Activated CD8-positive, alpha-beta T cell treated with anti-CD3 and anti-CD28 coated beads, Interleukin-2, amount 10 ng/mL, durations not matched to agents 7 days and 5 days (primary cell): ENCODE measurements at regions of chr12 and their contacts with region 1.

Region 1: GRCh38 chr12:76455582-76456345 is 103.8 kb downstream of the OSBPL8 start:
- DNase-seq: peak; percentile 32
- ATAC-seq: peak; percentile 70
- H3K4me3 Mint-ChIP-seq: no peak overlapping the region
- H3K27ac Mint-ChIP-seq: no peak overlapping the region
- H3K4me1 Mint-ChIP-seq: peaks cover 5% of the 10 kb centered on the region
- H3K27me3 Mint-ChIP-seq: no peaks in the 10 kb centered on the region

Region 2: DNA sequence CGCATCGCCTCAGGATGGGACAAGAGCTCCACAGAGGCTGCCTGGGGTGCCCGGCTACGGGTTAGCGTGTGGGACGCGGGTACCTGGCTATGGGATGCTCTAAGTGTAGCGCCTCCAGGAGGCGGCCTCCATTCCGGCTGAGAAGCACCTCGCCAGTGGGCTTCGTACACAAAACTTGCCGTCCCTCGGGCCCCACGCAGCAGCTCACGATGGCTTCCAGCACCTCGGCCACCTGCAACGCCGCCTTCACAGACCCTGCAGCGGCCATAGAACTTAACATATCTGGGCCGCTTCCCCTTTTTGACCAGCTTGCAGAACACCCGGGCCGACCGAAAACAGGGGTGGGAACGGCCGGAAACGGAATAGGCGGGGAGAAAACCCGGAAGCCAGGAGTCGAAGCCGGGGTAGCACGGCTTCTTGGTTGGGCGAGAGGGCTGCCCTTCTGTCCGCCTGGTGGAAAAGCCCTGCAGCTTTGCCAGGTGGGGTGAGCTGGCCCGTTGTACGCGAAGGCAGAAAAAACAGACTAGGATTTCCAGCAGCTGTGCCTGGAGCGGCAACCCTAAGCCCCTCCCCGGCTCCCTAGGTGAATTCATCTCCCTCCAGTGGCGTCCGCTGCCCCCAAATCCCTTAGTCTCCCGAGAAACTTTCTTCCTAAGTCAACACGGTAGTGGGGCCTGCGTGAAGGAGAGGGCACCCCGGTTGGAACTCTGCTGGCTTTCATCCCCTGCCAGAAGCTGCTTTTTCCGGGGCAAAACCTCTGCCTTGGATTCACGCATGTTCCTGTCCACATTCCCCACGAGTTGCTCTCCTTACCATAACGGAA is 107.5 kb before region 1 on chr12 and contains the start of gene BBS10:
- CTCF ChIA-PET with region 1: interaction called, 20 read pairs
- POLR2A ChIA-PET with region 1: no interaction called
- DNase-seq: peak; percentile 92
- ATAC-seq: peak; percentile 97
- H3K4me3 Mint-ChIP-seq: peak within 1 kb of the TSS; percentile 93
- H3K27ac Mint-ChIP-seq: peak within 1 kb of the TSS; percentile 92
- H3K4me1 Mint-ChIP-seq: peaks cover 21% of the 10 kb centered on the region
- H3K27me3 Mint-ChIP-seq: no peaks in the 10 kb centered on the region
- total RNA-seq, gene BBS10: 3.5 to 4.0 TPM

Region 3: GRCh38 chr12:76470028-76470939 is 14.5 kb after region 1 on chr12:
- CTCF ChIA-PET with region 1: interaction called, 15 read pairs
- POLR2A ChIA-PET with region 1: no interaction called
- DNase-seq: no peak
- ATAC-seq: peak; percentile 58
- H3K4me3 Mint-ChIP-seq: no peak overlapping the region
- H3K27ac Mint-ChIP-seq: no peak overlapping the region
- H3K4me1 Mint-ChIP-seq: no peaks in the 10 kb centered on the region
- H3K27me3 Mint-ChIP-seq: no peaks in the 10 kb centered on the region

Region 4: DNA sequence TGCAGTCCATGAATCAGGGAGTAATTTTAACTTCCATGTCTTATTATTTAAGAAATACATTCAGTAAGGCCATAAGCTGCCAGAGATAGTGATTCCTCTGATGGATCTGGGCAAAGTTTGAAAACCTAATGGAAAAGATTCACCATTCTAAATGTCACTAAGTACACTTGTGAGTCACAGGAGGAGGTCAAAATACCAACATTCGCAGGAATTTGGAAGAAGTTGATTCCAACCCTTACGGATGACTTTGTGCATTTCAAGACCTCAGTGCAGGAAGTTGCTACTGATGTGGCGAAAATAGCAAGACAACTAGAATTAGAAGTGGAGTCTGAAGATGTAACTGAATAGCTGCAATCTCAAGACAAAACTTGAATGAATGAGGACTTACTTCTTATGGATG is 34.0 kb after region 1 on chr12:
- CTCF ChIA-PET with region 1: no interaction called
- POLR2A ChIA-PET with region 1: no interaction called
- DNase-seq: no peak
- ATAC-seq: no peak
- H3K4me3 Mint-ChIP-seq: no peak overlapping the region
- H3K27ac Mint-ChIP-seq: no peak overlapping the region
- H3K4me1 Mint-ChIP-seq: peaks cover 7% of the 10 kb centered on the region
- H3K27me3 Mint-ChIP-seq: no peaks in the 10 kb centered on the region

Region 5: GRCh38 chr12:76586764-76587395 is 131.1 kb after region 1 on chr12:
- CTCF ChIA-PET with region 1: interaction called, 13 read pairs
- POLR2A ChIA-PET with region 1: no interaction called
- DNase-seq: peak; percentile 64
- ATAC-seq: peak; percentile 57
- H3K4me3 Mint-ChIP-seq: no peak overlapping the region
- H3K27ac Mint-ChIP-seq: no peak overlapping the region
- H3K4me1 Mint-ChIP-seq: peaks cover 15% of the 10 kb centered on the region
- H3K27me3 Mint-ChIP-seq: peaks cover 2% of the 10 kb centered on the region